A549 (cell line): ENCODE measurements at regions of chr10 and their contacts with region 1.

Region 1: GRCh38 chr10:110137142-110137545 is 70.3 kb upstream of the MXI1 start:
- DNase-seq: peak; percentile 50 to 77
- ATAC-seq: peak; percentile 88 to 89
- H3K4me3 ChIP-seq: no peak overlapping the region
- H3K27ac ChIP-seq: no peak overlapping the region
- H3K4me1 ChIP-seq: no peaks in the 10 kb centered on the region
- CTCF ChIP-seq: peak; percentile 90
- EP300 ChIP-seq: no peak
- POLR2A ChIP-seq: no peak
- RAD21 ChIP-seq: peak; percentile 87 to 90

Region 2: DNA sequence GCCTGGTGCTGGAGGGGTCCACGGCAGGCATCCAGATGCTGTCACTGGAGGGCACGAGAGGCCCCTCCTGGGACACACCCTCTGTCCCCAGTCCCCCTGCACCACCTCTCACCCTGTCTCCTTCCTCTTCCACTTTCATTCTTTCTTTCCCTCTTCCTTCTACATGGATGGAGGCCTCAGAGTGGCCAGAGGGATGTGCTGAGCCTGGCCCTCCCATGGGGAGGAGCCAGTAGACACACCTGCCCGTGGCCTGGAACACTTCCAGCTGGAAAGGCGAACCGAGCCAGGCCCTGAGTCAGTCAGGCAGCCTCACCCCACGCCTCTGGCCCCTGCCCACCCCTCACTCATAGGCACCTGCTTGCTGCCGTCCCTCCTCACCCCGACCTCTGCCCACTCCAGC is 14.3 kb after region 1 on chr10:
- CTCF ChIA-PET with region 1: interaction called, 20 read pairs
- POLR2A ChIA-PET with region 1: no interaction called
- DNase-seq: no peak
- ATAC-seq: peak in 1 of 2 experiments; percentile 32; a peak in 2 of 6 replicates
- H3K4me3 ChIP-seq: no peak overlapping the region
- H3K27ac ChIP-seq: no peak overlapping the region
- H3K4me1 ChIP-seq: no peaks in the 10 kb centered on the region
- CTCF ChIP-seq: no peak
- EP300 ChIP-seq: no peak
- POLR2A ChIP-seq: no peak
- RAD21 ChIP-seq: no peak

Region 3: DNA sequence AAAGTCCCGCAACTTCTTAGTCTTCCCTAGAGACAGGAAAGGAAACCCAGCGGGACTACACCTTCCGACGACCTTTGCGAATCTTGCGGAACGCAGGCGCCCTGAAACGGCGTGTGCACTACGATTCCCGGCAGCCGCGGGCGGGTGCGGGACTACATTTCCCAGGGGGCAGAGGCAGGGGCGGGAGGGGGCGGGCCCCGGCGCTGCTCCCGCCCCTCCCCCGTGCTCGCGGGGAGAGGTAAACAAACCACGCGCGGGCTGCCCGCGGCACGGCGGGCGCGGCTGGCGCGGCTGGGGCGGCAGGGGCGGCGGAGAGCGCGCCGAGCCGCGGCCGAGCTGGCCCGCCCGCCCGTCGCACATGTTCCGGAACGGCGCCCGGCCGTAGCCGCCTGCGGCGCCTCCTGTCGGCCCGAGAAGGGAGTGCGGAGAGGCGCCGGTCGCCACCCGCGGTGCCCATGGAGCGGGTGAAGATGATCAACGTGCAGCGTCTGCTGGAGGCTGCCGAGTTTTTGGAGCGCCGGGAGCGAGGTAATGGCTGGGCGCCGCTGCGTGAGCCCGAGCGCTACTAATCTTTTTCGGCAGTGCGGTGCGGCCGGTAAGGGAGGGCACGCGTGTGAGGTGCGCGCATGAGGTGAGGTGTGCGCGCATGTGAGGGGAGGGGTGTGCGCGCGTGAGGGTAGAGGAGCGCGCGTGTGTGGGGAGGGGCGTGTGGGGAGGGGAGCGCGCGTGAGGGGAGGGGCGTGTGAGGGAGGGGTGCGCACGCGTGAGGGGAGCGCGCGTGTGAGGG is 88.8 kb after region 1 on chr10:
- CTCF ChIA-PET with region 1: interaction called, 60 read pairs
- POLR2A ChIA-PET with region 1: no interaction called
- DNase-seq: peak; percentile 74 to 93
- ATAC-seq: peak; percentile 80 to 85
- H3K4me3 ChIP-seq: peak overlapping the region; percentile 65
- H3K27ac ChIP-seq: peak overlapping the region; percentile 78 to 89
- H3K4me1 ChIP-seq: peaks cover 10% of the 10 kb centered on the region; the same call in 2 of the 3 replicates
- CTCF ChIP-seq: peak; percentile 91
- EP300 ChIP-seq: no peak
- POLR2A ChIP-seq: no peak; the same call in 1 of the 2 replicates
- RAD21 ChIP-seq: peak in 1 of 2 experiments; percentile 55; a peak in 3 of 5 replicates

Region 4: DNA sequence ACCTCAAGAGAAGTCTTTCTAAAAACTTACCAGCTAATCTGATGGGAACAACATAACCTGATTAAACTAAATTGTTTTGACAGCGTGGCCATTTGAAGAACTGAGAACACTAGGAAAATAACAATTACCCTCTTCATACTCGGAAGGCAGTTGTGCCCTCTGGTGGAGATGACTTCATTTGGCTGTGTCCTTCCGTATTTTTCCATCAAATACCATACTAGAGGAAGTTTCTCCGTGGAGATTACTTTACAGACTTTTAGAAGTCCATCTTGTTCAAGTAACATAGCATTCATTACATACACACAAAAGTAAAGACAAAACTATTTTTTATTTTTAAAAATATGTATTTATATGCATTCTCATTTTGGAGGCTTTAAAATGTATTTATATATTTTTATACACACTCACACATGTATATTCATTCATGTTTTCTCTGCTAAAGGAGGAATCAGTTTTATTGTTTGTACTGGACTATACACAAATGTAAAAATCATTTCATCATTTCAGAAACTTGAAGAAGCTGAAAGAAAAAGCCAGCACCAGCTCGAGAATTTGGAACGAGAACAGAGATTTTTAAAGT is 142.4 kb after region 1 on chr10:
- CTCF ChIA-PET with region 1: interaction called, 98 read pairs
- POLR2A ChIA-PET with region 1: no interaction called
- DNase-seq: peak; percentile 37 to 69
- ATAC-seq: peak; percentile 74 to 88; a peak in 5 of 6 replicates
- H3K4me3 ChIP-seq: no peak overlapping the region
- H3K27ac ChIP-seq: no peak overlapping the region
- H3K4me1 ChIP-seq: 0 out of 3 replicates have a peak, but pooled peaks cover 2% of the 10 kb centered on the region
- CTCF ChIP-seq: peak; percentile 96
- EP300 ChIP-seq: no peak
- POLR2A ChIP-seq: no peak
- RAD21 ChIP-seq: peak; percentile 91 to 92